Activated CD4-positive, alpha-beta T cell treated with anti-CD3 and anti-CD28 coated beads, Interleukin-2, amount 10 ng/mL, durations not matched to agents 24 days and 14 days (primary cell): ENCODE measurements at regions of chr1 and their contacts with region 1.

Region 1: GRCh38 chr1:222792744-222793143 is 22.1 kb upstream of the DISP1 start:
- DNase-seq: no peak
- H3K4me3 Mint-ChIP-seq: no peak overlapping the region
- H3K27ac Mint-ChIP-seq: no peak overlapping the region
- H3K4me1 Mint-ChIP-seq: peaks cover 10% of the 10 kb centered on the region
- H3K27me3 Mint-ChIP-seq: peaks cover 4% of the 10 kb centered on the region

Region 2: DNA sequence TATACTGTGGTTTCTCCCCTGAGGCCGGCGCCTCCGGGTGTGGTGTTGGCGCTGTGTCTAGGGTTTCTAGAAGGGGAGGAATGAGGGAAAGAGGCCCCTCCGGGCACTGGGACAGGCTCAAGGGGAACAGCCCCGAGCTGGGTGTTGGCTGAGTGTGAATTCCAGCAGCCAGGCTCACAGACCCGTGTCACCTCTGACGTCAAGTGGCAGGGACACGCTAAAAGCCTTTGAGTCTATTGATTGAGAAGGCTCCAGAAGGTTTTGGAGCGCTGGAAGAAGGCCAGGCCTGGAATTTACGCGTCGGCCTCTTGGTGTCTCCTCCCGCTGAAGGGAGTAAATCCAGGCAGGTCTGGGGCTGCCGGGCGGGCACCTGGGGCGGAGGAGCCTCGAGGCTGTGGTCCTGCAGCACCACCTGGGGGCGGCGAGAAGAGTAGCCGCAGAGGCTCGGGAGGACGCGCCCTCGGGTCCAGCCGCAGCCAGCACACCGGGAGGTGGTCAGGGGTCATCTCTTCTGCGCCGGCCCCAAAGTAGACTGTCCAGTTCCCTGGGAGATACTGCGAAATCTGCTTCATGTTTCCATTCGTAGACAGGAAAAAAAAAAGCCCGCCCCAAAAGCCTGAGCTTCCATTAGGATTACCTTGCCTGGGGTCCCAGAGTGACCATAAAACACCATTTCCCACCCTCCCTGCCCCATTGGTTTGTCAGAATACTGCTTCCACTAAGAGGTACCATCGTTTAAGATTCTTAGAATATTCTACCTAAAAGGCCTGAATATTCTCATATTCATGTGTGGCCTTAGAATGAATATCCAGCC is 288.6 kb after region 1 on chr1:
- intact Hi-C with region 1: loop called (anchors 1 kb)
- DNase-seq: peak; percentile 89
- H3K4me3 Mint-ChIP-seq: peak overlapping the region; percentile 66
- H3K27ac Mint-ChIP-seq: no peak overlapping the region
- H3K4me1 Mint-ChIP-seq: no peaks in the 10 kb centered on the region
- H3K27me3 Mint-ChIP-seq: no peaks in the 10 kb centered on the region

Region 3: DNA sequence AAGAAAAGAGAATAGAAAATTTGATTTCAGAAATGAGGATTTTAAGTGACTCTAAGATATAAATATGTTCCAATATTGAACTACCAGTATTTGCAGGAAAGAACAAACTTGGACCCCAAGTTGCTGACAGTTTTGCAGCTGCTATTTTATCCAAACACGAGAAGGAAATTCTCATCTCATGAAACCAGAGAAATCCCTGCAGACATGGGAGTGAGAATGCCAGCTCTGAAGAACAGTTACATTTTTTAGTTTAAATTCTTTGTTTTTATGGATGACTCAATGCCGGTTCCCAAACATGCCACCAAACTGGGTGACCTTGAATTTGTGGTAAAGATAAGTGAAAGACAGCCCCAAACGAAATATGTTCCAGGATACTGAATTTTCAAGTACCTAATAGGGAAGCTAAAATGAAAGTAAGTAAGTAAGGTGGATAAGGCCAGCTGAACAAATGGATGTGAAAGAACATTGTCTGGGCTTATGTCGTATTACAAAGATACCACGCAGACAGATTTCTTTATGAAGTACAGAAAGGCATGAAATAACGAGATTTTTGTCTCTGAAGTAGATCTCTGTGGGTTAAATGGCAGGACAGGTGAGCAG is 330.4 kb after region 1 on chr1:
- intact Hi-C with region 1: loop called (anchors 1 kb)
- DNase-seq: no peak
- H3K4me3 Mint-ChIP-seq: peak overlapping the region; percentile 65
- H3K27ac Mint-ChIP-seq: no peak overlapping the region
- H3K4me1 Mint-ChIP-seq: peaks cover 6% of the 10 kb centered on the region
- H3K27me3 Mint-ChIP-seq: peaks cover 8% of the 10 kb centered on the region